H1 (cell line): ENCODE measurements at regions of chr2 and their contacts with region 1.

Region 1: DNA sequence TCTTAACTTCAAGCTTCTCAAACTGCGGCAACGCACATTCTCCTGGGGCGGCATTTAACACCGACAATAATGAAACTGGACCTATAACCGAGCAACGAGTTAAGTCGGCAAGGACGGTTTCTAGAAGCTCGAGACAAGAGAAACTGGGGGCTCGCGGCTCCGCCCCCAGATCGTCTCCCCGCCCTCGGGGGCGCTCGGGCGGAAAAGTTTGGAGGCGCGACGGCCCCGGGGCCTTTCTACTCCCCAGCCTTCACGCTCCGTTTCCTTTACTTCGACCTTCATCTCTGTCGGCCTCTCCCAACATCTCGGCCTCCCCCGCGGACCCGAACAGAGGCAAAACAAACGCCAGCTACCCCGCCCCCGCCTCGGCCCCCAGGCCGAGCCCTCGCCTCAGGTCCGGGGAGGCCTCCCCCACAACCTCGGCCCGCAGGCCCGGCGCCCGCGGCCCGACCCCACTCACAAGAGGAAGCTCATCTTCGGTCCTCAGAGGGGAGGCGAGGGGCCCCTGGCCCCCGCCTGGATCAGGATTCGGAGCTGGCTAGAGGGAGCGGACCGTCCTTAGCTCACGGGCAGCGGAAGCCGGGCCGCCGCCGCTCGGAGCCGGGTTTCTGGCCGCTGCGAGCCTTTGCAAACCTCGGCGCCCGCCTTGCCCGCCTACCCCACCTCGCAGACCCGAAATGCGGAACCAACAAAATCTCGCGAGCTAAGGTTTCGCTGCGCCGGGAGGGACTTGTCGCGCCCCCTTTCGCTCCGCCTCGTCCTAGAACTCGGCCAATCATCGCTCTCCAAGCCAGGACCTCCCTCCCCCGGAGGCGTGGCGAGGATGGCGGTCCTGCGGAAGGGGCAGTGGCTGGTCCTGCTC is at the start of gene MOB1A:
- DNase-seq: peak; percentile 96
- H3K4me3 ChIP-seq: peak within 1 kb of the TSS; percentile 86 to 94 (median 90)
- H3K27ac ChIP-seq: peak within 1 kb of the TSS; percentile 84
- H3K4me1 ChIP-seq: peaks cover 0 to 5% (median 2%) of the 10 kb centered on the region in 4 experiments; a peak in 3 of 7 replicates
- H3K27me3 ChIP-seq: no peaks in the 10 kb centered on the region
- CTCF ChIP-seq: no peak
- EP300 ChIP-seq: no peak
- POLR2A ChIP-seq: peak; percentile 92 to 95
- RAD21 ChIP-seq: no peak
- total RNA-seq, gene MOB1A: 91.7 and 93.9 TPM in 2 replicates

Region 2: GRCh38 chr2:74198461-74199274 is 20.2 kb after region 1 on chr2 and contains the start of gene MTHFD2:
- CTCF ChIA-PET with region 1: interaction called, 21 read pairs
- POLR2A ChIA-PET with region 1: interaction called, 2,699 read pairs
- DNase-seq: peak; percentile 94 to 95
- H3K4me3 ChIP-seq: peak within 1 kb of the TSS; percentile 85 to 98 (median 89)
- H3K27ac ChIP-seq: peak within 1 kb of the TSS; percentile 97
- H3K4me1 ChIP-seq: peaks cover 0 to 8% (median 3%) of the 10 kb centered on the region in 4 experiments; a peak in 2 of 7 replicates
- H3K27me3 ChIP-seq: no peaks in the 10 kb centered on the region
- CTCF ChIP-seq: peak; percentile 56 to 81 (median 76)
- EP300 ChIP-seq: peak in 1 of 2 experiments; percentile 66; a peak in 1 of 3 replicates
- POLR2A ChIP-seq: peak; percentile 98
- RAD21 ChIP-seq: peak; percentile 26 to 45
- total RNA-seq, gene MTHFD2: 260 and 291 TPM in 2 replicates

Region 3: GRCh38 chr2:74206180-74206688 is 27.8 kb after region 1 on chr2:
- CTCF ChIA-PET with region 1: interaction called, 14 read pairs
- POLR2A ChIA-PET with region 1: interaction called, 2,699 read pairs
- DNase-seq: no peak
- H3K4me3 ChIP-seq: no peak overlapping the region
- H3K27ac ChIP-seq: no peak overlapping the region
- H3K4me1 ChIP-seq: peaks cover 2 to 18% (median 14%) of the 10 kb centered on the region in 4 experiments
- H3K27me3 ChIP-seq: no peaks in the 10 kb centered on the region
- CTCF ChIP-seq: no peak
- EP300 ChIP-seq: no peak
- POLR2A ChIP-seq: peak in 1 of 2 experiments; percentile 37; a peak in 2 of 3 replicates
- RAD21 ChIP-seq: no peak